IMR-90 (cell line): ENCODE measurements at regions of chr1 and their contacts with region 1.

Region 1: DNA sequence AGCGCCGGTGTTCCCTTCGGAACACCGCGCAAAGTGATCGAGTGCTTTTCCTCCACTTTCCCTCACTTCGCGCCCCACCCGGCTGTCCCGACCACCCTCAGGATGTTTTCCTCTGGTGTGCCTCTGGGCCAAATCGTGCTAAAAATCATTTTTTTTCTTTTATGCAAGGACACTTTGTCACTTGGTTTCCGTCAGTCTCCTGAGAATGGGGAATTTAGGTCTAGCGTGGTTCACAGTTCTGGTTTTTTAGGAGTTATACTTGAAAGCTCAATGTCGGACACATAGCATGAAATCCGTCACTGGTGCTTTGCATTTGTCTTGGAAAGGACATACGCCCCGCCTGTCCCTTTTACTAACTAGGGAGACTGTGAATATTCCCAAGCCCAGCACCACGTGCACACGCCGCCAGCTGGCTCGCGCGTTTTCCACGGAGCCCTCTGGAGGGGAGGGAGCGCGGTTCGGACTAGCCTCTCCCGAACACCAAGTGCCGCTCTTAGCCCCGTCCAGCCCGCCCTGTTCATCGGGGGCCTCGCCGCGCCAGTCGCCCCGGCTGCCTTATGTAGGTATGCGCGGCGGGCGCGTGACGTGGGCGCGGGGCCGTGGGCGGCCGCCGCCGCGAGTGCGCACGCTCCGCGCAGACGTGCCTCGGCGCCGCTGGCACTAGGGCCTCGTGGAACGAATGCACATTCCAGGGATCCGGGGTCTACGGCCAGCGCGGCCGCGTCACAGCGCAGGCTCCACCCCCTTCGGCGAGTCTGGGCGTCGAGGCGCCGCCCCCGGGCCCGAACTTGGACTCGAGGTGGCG is 572 bp upstream of the IRF2BP2 start:
- DNase-seq: peak; percentile 95
- ATAC-seq: peak; percentile 74
- H3K4me3 ChIP-seq: peak overlapping the region; percentile 76
- H3K27ac ChIP-seq: peak overlapping the region; percentile 98
- H3K4me1 ChIP-seq: peaks cover 14% of the 10 kb centered on the region
- H3K27me3 ChIP-seq: no peaks in the 10 kb centered on the region
- CTCF ChIP-seq: peak; percentile 7; the same call in 1 of the 2 replicates
- POLR2A ChIP-seq: peak; percentile 98
- RAD21 ChIP-seq: peak; percentile 20

Region 2: DNA sequence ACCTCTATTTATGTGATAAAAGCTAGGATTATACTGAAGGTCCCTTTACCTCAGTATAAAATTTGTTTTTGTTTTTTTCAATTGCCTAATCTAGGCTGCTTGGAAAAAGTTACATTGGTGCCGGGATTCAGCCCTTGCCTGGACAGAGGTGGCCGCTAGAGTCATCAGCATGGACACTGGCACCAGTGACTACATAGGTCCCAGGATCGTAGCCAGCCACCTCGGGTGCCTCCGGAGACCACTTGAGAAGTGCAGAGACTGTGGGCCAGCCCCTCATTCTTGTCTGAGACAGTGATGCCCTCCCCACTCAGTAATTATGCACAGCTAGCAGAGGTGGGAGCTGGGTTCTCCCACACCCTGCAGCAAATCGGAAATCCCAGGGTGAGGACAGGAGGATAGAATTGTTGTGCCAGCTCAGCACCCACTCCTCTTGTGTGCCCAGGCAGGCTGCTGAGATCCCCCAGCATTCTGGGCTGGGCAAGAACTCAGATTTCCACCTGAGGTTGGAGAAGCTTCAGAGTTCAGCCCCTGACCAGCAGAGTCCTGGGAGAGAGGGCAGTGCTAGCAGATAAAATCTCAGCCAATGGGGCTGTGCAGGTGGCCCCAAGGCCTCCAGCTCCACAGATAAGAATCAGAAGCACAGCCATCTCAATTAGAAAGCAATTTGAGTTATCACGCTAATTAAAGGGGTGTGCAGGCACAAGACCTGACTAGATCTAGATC is 44.7 kb after region 1 on chr1:
- CTCF ChIA-PET with region 1: no interaction called
- POLR2A ChIA-PET with region 1: no interaction called
- dilution Hi-C with region 1: no loop called
- in situ Hi-C with region 1: no loop called
- intact Hi-C with region 1: no loop called
- DNase-seq: no peak
- ATAC-seq: no peak
- H3K4me3 ChIP-seq: no peak overlapping the region
- H3K27ac ChIP-seq: no peak overlapping the region
- H3K4me1 ChIP-seq: peaks cover 22% of the 10 kb centered on the region
- H3K27me3 ChIP-seq: no peaks in the 10 kb centered on the region
- CTCF ChIP-seq: no peak
- POLR2A ChIP-seq: no peak
- RAD21 ChIP-seq: no peak

Region 3: DNA sequence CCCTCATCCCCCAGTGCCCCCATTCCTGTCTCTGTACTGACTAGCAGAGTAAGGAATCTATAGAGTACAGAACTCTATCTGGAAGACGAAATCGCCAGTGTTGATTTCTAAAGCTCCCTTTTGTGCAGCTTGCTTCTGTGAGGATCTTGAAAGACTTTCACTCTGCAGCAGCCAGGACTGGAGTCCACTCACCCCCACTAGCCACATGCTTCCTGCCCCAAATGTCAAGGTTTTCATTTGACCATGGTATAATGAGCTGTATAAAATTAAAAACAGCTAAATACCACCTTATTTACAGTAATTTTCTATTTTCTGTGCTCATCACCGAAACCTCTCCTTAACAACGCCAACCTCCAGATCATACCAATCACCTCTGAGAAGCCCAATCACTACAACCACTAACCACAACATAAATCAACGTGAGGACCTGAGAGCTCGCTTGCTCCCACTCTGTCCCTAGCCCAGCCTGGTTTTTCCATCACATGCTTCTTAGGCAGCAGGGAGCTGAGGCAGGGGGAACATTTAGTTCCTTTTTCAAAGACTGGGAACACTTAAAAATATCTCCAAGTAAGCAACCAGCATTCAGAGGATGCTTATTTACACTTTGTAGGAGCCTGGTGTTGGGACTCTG is 55.5 kb after region 1 on chr1:
- CTCF ChIA-PET with region 1: no interaction called
- POLR2A ChIA-PET with region 1: no interaction called
- dilution Hi-C with region 1: no loop called
- in situ Hi-C with region 1: no loop called
- intact Hi-C with region 1: no loop called
- DNase-seq: no peak
- ATAC-seq: no peak
- H3K4me3 ChIP-seq: no peak overlapping the region
- H3K27ac ChIP-seq: no peak overlapping the region
- H3K4me1 ChIP-seq: no peaks in the 10 kb centered on the region
- H3K27me3 ChIP-seq: no peaks in the 10 kb centered on the region
- CTCF ChIP-seq: no peak
- POLR2A ChIP-seq: no peak
- RAD21 ChIP-seq: no peak

Region 4: DNA sequence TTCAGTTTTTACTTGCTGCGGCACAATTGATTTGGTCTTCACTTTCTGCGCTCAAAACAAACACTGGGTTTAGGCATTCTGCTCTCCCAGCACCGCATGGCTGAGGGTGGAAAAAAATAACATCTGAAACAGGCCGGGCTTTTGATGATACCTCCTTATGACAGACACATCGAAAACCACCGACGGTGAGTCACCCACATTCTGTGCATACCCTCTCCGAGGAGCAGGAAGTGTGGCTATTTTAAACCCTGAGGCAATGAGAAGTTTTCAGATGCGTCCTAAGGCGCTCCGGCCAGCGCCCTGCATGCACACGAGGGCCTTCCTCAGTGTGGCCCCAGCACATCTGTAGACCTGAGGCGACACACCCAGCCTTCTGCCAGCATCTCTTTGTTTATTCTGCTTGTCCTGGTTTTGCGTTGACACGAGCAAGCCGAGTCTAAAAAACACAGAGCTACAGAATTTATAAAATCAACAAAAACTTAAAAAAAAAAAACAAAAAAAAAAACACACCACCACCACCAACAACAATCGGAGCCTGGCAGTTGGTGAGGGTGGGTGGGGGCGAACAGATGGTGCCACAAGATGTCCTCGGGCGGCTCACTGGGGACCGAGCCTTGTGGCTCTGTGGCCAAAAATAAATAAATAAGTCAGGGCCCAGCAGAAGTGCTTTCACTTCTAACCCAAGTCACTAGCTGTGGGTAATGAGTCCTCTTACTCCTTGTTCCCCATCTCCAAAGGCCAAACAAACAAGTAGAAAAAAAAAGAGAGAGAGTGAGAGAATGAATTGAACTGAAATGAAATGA is 162.0 kb after region 1 on chr1:
- CTCF ChIA-PET with region 1: no interaction called
- POLR2A ChIA-PET with region 1: no interaction called
- dilution Hi-C with region 1: no loop called
- in situ Hi-C with region 1: no loop called
- intact Hi-C with region 1: loop called (anchors 2 kb)
- DNase-seq: peak; percentile 99
- ATAC-seq: peak; percentile 98
- H3K4me3 ChIP-seq: no peak overlapping the region
- H3K27ac ChIP-seq: peak overlapping the region; percentile 80
- H3K4me1 ChIP-seq: peaks cover 7% of the 10 kb centered on the region
- H3K27me3 ChIP-seq: peaks cover 9% of the 10 kb centered on the region
- CTCF ChIP-seq: no peak
- POLR2A ChIP-seq: peak; percentile 71
- RAD21 ChIP-seq: 0 out of 2 replicates have a peak, but pooled peaks have one; percentile 40

Region 5: GRCh38 chr1:234851450-234852438 is 241.2 kb after region 1 on chr1:
- CTCF ChIA-PET with region 1: no interaction called
- POLR2A ChIA-PET with region 1: no interaction called
- dilution Hi-C with region 1: no loop called
- in situ Hi-C with region 1: loop called (anchors 25 kb)
- intact Hi-C with region 1: no loop called
- DNase-seq: peak; percentile 55
- ATAC-seq: no peak
- H3K4me3 ChIP-seq: no peak overlapping the region
- H3K27ac ChIP-seq: no peak overlapping the region
- H3K4me1 ChIP-seq: peaks cover 11% of the 10 kb centered on the region
- H3K27me3 ChIP-seq: no peaks in the 10 kb centered on the region
- CTCF ChIP-seq: no peak
- POLR2A ChIP-seq: no peak
- RAD21 ChIP-seq: 0 out of 2 replicates have a peak, but pooled peaks have one; percentile 1

Region 6: DNA sequence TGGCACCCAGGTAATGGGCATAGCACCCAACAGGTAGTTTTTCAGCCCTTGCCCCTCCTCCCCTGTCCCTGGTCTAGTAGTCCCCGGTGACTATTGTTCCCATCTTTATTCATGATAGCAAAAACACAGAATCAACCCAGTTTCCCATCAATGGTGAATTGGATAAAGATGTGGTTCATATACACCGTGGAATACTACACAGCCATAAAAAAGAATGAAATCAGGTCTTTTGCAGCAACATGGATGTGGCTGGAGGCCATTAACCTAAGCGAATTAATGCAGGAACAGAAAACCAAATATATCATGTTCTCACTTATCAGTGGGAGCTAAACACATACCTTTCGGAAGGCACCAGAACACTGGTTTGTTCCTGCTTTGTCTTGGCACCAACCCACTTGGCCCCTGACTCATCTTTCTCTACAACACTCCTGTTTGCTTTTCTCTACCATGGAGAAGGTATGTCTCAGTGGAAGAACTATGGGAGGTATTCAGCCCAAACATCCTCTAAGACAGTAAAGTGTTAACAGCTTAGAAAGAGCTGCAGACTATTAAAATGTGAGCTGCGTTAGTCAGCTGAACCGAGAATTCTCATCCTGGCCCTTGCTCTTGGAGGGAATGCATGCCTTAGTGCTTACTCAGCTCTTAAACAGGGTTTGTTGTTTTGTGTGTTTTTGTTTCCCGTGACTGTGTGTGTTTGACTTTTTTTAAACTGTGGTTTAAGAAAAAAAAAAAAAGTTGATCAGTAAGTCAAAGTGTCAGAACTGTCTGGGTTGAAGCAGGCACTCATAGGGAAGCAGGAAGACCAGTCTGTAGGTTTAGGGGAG is 315.1 kb after region 1 on chr1:
- CTCF ChIA-PET with region 1: no interaction called
- POLR2A ChIA-PET with region 1: no interaction called
- dilution Hi-C with region 1: no loop called
- in situ Hi-C with region 1: no loop called
- intact Hi-C with region 1: loop called (anchors 5 kb)
- DNase-seq: peak; percentile 99
- ATAC-seq: peak; percentile 96
- H3K4me3 ChIP-seq: no peak overlapping the region
- H3K27ac ChIP-seq: peak overlapping the region; percentile 60
- H3K4me1 ChIP-seq: peaks cover 17% of the 10 kb centered on the region
- H3K27me3 ChIP-seq: no peaks in the 10 kb centered on the region
- CTCF ChIP-seq: no peak
- POLR2A ChIP-seq: no peak
- RAD21 ChIP-seq: peak; percentile 48

Region 7: DNA sequence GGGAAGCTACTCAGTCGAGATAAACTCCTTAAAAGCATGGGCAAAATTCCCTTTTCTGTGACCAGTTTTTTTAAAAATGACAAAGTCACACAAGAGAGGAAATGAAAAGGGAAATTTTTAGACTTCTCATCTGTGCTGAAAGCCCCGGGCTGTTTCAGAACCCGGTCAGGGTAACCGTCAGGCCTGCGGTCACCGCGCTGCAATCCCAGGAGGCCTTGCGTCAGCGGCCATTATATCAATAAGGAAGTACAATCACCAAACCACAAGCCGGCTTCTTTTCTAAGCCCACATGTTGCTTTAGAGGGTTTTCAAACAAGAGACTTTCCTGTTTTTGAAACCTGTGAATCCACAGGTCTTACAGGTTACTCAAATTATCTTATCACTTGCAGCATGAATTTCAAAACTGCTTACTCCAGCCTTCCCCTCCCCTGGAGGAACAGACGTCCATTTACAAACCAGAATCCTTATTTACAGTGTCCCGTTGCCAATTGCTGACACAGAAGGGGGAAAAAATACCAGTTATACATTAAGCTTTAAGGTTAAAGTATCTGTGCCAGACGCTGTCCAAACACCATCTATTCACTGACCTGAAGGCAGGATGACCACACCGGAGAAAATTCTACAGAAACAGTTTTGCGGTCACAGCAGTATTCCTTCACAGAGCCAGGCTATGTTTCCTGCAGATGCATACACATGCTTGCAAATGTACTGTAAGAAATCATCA is 352.8 kb after region 1 on chr1:
- CTCF ChIA-PET with region 1: interaction called, 3 read pairs
- POLR2A ChIA-PET with region 1: no interaction called
- dilution Hi-C with region 1: no loop called
- in situ Hi-C with region 1: no loop called
- intact Hi-C with region 1: loop called (anchors 2 kb)
- DNase-seq: peak; percentile 95
- ATAC-seq: peak; percentile 33
- H3K4me3 ChIP-seq: no peak overlapping the region
- H3K27ac ChIP-seq: peak overlapping the region; percentile 90
- H3K4me1 ChIP-seq: peaks cover 21% of the 10 kb centered on the region
- H3K27me3 ChIP-seq: no peaks in the 10 kb centered on the region
- CTCF ChIP-seq: no peak
- POLR2A ChIP-seq: no peak
- RAD21 ChIP-seq: no peak; the same call in 1 of the 2 replicates

Region 8: DNA sequence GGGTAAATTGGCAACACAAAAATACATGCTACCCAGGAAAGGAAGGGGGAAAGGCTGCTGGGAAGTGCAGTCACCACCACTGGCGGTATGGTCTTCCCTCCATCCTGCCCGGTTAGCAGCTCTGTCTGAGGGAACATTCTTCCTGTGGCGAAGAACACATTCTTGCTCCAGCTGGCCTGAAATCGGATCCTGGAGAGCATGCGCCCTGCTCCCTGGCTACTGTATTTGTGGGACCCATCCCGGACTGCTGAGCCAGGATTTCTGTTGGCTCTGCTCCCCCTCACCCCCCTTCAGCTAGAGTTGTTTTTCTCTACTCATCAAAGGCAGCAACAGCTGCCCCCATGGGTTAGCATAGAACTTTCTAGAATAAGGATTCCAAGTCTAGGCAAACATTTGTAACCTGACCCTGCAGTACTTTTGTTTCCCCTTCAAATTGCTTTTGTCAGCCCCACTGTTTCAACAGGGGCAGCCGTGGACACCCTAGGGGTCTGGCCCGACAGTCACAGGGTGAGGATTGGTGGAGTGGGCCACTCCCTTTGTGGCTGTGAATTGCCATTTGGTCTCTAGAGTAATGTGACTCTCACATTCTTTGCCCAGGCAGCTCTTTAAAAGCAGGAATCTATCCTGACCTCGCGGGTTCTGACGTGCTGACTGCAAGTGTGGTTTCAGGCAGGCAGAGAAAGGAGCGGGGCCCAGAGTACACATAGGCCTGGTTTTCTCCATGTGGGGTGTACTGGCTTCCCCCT is 360.4 kb after region 1 on chr1:
- CTCF ChIA-PET with region 1: interaction called, 3 read pairs
- POLR2A ChIA-PET with region 1: no interaction called
- dilution Hi-C with region 1: no loop called
- in situ Hi-C with region 1: loop called (anchors 5 kb)
- intact Hi-C with region 1: loop called (anchors 2 kb)
- DNase-seq: peak; percentile 98
- ATAC-seq: peak; percentile 78
- H3K4me3 ChIP-seq: no peak overlapping the region
- H3K27ac ChIP-seq: peak overlapping the region; percentile 95
- H3K4me1 ChIP-seq: peaks cover 38% of the 10 kb centered on the region
- H3K27me3 ChIP-seq: no peaks in the 10 kb centered on the region
- CTCF ChIP-seq: 0 out of 2 replicates have a peak, but pooled peaks have one; percentile 11
- POLR2A ChIP-seq: peak; percentile 55
- RAD21 ChIP-seq: peak; percentile 28; the same call in 1 of the 2 replicates

Region 9: GRCh38 chr1:235075188-235075926 is 464.8 kb after region 1 on chr1:
- CTCF ChIA-PET with region 1: no interaction called
- POLR2A ChIA-PET with region 1: no interaction called
- dilution Hi-C with region 1: no loop called
- in situ Hi-C with region 1: loop called (anchors 5 kb)
- intact Hi-C with region 1: loop called (anchors 2 kb)
- DNase-seq: peak; percentile 97
- ATAC-seq: peak; percentile 85
- H3K4me3 ChIP-seq: no peak overlapping the region
- H3K27ac ChIP-seq: peak overlapping the region; percentile 95
- H3K4me1 ChIP-seq: peaks cover 44% of the 10 kb centered on the region
- H3K27me3 ChIP-seq: no peaks in the 10 kb centered on the region
- CTCF ChIP-seq: no peak
- POLR2A ChIP-seq: peak; percentile 54; the same call in 1 of the 2 replicates
- RAD21 ChIP-seq: no peak